ENCODE measurements at regions of chr18 and their contacts with region 1.

Region 1: DNA sequence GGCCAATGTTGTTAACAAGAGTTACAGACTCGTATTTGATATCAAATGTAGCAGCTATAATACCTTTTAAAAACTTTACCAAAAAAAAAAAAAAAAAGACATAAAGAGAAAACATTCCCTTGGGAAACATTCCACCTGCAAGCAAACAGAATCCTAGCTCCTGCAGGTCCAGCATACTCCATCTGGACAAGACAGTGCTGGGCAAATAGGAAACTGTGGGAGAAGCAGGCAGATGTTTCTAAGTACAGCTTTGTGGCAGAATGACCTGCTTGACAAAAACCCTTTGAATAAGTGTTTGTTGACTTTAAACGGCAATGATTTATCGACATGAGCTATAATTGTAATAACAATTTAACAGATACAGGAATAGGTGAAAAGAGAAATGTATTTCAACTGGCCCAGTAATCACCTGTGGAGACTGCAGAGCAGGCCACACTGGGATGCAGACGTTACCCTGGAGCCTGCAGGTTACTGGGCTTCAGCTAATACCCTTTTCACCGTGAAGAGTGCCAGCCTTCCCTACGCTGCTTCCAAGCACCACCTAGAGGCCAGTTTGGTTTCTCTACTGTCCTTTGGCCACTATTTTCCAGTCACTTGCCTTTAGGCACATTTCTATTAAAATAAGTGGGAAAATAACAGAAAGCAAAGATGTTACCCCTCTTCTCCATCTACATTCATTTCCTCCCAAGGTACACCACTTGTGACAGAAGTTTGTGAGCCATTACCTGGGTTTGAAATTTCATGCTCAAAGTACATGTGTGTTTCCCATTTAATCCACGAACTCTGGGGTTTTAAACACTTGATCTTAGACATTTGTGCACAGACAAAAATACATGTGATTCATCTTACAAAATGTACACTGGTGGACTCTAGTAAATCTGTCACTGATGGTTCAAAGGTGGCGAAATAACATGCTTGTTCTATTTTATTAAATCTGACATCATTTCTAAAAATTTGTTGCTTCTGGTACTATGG is 96.9 kb upstream of the ZNF397 start:
- DNase-seq: peak in 8 of 9 experiments; percentile 15 to 63 (median 38)
- ATAC-seq: peak; percentile 65
- H3K4me3 ChIP-seq: no peak overlapping the region
- H3K4me3 Mint-ChIP-seq: no peak overlapping the region
- H3K27ac ChIP-seq: no peak overlapping the region
- H3K27ac Mint-ChIP-seq: no peak overlapping the region
- H3K4me1 ChIP-seq: no peaks in the 10 kb centered on the region
- H3K4me1 Mint-ChIP-seq: peaks cover 4% of the 10 kb centered on the region
- H3K27me3 ChIP-seq: no peaks in the 10 kb centered on the region
- H3K27me3 Mint-ChIP-seq: no peaks in the 10 kb centered on the region
- CTCF ChIP-seq: no peak

Region 2: DNA sequence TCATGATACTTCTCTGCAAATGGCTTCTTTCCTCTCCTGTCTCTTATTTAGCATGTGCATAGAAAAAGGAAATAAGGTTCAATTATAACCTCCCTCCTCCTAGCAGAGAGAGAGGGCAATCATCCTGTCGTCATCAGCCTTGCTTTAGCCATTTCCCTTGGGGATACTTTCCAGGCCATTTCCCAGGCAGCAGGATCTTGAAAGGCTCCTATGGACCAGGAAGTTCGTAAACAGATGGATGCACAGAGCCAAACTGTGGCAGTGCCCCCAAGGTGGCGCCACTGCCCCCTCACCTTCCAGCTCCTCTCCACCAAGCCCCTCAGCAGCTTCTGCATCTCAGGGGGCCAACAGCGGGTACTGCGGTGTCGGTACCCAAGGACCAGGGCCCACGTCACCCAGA is 276.4 kb before region 1 on chr18:
- CTCF ChIA-PET with region 1: interaction called, 3 read pairs
- POLR2A ChIA-PET with region 1: no interaction called
- intact Hi-C with region 1: loop called (anchors 5 to 10 kb)
- DNase-seq: peak in 1 of 9 experiments; percentile 6
- ATAC-seq: no peak
- H3K4me3 ChIP-seq: no peak overlapping the region
- H3K4me3 Mint-ChIP-seq: no peak overlapping the region
- H3K27ac ChIP-seq: no peak overlapping the region
- H3K27ac Mint-ChIP-seq: no peak overlapping the region
- H3K4me1 ChIP-seq: peaks cover 3% of the 10 kb centered on the region
- H3K4me1 Mint-ChIP-seq: peaks cover 16% of the 10 kb centered on the region
- H3K27me3 ChIP-seq: no peaks in the 10 kb centered on the region
- H3K27me3 Mint-ChIP-seq: no peaks in the 10 kb centered on the region
- CTCF ChIP-seq: no peak

Measured in CD8-positive, alpha-beta T cell (primary cell).